Mammary epithelial cell (primary cell): ENCODE measurements at regions of chr6 and their contacts with region 1.

Region 1: DNA sequence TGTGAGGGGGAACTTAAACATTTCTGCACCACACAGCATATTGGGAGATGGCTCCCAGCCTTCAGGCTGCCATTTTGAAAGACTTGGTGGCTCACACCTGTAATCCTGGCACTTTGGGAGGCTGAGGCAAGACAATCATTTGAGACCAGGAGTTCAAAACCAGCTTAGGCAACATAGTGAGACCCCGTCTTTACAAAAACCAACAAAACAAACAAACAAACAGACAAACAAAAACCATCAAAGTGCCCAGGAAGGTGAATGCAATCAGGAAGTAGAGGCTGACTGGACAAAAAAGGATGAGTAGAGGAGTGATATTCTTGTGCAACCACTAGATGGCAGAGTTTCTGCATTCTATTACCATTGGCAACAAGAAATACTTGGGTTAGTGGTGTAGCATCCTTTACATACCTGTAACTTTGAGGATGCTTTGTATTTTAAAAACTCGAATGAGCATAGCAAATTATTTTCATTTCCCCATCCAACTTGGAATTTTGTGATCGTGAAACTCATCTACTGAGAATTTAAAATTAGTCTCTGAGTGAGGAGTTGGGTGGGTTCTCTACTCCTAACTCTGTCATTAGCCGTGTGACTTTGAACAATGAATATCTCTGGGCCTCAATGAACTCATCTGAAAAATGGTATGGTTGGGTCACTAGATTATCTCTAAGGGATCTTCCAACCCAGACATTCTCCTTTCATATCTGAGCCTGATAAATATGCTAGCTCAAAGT is 84.4 kb downstream of the CRYBG1 start:
- DNase-seq: peak; percentile 58
- H3K4me3 ChIP-seq: no peak overlapping the region
- H3K27ac ChIP-seq: no peak overlapping the region
- H3K4me1 ChIP-seq: peaks cover 31% of the 10 kb centered on the region
- H3K27me3 ChIP-seq: no peaks in the 10 kb centered on the region
- CTCF ChIP-seq: peak; percentile 71 to 74

Region 2: DNA sequence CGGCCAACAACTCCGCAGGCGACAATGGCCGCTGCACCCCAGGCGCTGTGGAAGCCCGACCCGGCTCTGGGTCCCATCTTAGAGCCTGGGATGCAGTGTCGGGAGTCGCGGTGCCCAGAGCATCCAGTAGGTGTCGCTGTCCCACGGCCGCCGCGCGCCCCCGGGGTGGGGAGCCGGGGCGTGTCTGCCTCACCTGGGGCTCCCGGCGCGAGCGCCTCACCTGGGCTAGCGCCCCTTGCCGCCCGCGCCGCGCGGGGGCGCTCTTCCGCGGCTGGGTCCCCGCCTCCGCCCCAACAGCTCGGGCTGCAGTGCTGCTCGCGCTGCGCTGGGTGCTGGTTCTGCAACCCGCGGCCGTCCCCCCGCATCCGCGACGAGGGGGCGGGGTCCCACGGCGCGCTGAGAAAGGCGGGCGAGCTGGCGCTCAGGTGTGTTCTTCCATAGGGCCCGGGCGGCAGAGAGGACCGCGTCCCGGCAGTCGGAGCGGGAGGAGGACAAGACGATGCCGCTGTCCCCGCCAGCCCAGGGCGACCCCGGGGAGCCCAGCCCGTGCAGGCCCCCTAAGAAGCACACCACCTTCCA is 84.4 kb before region 1 on chr6 and contains the start of gene CRYBG1:
- CTCF ChIA-PET with region 1: interaction called, 4 read pairs
- dilution Hi-C with region 1: loop called (anchors 5 kb)
- in situ Hi-C with region 1: no loop called
- intact Hi-C with region 1: loop called (anchors 1 kb)
- DNase-seq: peak; percentile 91
- H3K4me3 ChIP-seq: peak within 1 kb of the TSS; percentile 82 to 94 (median 92)
- H3K27ac ChIP-seq: peak within 1 kb of the TSS; percentile 68
- H3K4me1 ChIP-seq: peaks cover 14% of the 10 kb centered on the region
- H3K27me3 ChIP-seq: no peaks in the 10 kb centered on the region
- CTCF ChIP-seq: peak; percentile 71 to 89
- total RNA-seq, gene CRYBG1: 78.5 to 92.9 TPM

Region 3: DNA sequence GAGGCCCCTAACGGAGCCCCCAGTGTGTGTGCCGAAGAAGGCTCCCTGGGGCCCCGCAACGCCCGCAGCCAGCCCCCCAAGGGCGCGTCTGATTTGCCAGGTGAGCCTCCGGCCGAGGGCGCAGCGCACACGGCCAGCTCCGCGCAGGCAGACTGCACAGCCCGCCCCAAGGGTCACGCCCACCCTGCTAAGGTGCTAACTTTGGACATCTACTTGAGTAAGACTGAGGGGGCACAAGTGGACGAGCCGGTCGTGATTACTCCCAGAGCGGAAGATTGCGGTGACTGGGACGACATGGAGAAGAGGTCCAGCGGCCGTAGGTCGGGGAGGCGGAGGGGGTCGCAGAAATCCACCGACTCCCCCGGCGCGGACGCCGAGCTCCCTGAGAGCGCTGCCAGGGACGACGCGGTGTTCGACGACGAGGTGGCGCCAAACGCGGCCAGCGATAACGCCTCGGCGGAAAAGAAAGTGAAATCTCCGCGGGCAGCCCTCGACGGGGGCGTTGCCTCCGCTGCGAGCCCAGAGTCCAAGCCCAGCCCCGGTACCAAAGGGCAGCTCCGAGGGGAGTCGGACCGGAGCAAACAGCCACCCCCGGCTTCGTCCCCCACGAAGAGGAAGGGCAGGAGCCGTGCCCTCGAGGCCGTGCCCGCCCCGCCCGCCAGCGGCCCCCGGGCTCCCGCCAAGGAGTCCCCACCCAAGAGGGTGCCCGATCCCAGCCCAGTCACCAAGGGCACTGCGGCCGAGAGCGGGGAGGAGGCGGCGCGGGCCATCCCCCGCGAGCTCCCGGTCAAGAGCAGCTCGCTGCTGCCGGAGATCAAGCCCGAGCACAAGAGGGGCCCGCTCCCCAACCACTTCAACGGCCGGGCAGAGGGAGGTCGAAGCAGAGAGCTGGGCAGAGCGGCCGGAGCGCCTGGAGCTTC is 67.4 kb after region 1 on chr6:
- CTCF ChIA-PET with region 1: interaction called, 5 read pairs
- dilution Hi-C with region 1: no loop called
- in situ Hi-C with region 1: no loop called
- intact Hi-C with region 1: loop called (anchors 2 kb)
- DNase-seq: peak; percentile 68
- H3K4me3 ChIP-seq: peak overlapping the region; percentile 41 to 62 (median 56)
- H3K27ac ChIP-seq: peak overlapping the region; percentile 70
- H3K4me1 ChIP-seq: peaks cover 41% of the 10 kb centered on the region
- H3K27me3 ChIP-seq: no peaks in the 10 kb centered on the region
- CTCF ChIP-seq: peak in 1 of 2 donors; percentile 22

Region 4: GRCh38 chr6:106568530-106568929 is 123.6 kb after region 1 on chr6:
- CTCF ChIA-PET with region 1: interaction called, 12 read pairs
- dilution Hi-C with region 1: loop called (anchors 5 kb)
- in situ Hi-C with region 1: loop called (anchors 5 kb)
- intact Hi-C with region 1: loop called (anchors 1 kb)
- DNase-seq: peak; percentile 53
- H3K4me3 ChIP-seq: no peak overlapping the region
- H3K27ac ChIP-seq: no peak overlapping the region
- H3K4me1 ChIP-seq: peaks cover 9% of the 10 kb centered on the region
- H3K27me3 ChIP-seq: no peaks in the 10 kb centered on the region
- CTCF ChIP-seq: no peak

Region 5: DNA sequence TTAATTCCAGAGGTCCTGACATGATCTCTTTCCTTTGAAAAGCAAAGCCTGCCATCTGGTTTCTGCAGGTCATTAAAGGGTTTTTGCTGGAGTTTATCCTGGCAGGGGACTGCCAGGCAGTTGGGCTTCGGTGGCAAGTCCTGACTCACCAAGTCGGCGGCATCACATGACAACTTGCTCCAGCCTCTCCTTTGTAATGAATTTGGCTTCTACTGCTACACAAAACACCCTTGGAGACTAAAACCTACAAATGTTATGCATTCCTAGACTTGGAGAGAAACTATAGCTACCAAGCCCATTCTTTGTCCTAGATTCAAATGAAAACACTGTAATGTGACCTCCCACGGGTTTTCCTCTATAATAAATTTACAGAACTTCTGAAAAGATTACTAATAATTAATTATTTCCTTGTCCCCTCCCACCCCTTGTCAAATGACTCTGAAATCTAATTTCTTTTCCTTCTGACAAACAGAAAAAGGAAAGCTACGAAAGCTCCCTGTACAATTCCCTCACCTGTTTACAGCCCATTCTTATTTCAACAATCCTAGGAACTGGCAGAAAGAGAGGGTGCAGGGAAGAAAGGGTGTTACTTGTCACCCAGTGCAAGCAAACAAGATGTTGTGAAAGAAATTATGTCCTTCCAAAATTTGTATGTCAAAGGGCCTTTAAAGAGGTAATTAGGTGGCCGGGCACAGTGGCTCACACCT is 247.3 kb after region 1 on chr6:
- CTCF ChIA-PET with region 1: no interaction called
- dilution Hi-C with region 1: no loop called
- in situ Hi-C with region 1: no loop called
- intact Hi-C with region 1: loop called (anchors 5 kb)
- DNase-seq: peak; percentile 70
- H3K4me3 ChIP-seq: no peak overlapping the region
- H3K27ac ChIP-seq: no peak overlapping the region
- H3K4me1 ChIP-seq: peaks cover 15% of the 10 kb centered on the region
- H3K27me3 ChIP-seq: no peaks in the 10 kb centered on the region
- CTCF ChIP-seq: no peak

Region 6: DNA sequence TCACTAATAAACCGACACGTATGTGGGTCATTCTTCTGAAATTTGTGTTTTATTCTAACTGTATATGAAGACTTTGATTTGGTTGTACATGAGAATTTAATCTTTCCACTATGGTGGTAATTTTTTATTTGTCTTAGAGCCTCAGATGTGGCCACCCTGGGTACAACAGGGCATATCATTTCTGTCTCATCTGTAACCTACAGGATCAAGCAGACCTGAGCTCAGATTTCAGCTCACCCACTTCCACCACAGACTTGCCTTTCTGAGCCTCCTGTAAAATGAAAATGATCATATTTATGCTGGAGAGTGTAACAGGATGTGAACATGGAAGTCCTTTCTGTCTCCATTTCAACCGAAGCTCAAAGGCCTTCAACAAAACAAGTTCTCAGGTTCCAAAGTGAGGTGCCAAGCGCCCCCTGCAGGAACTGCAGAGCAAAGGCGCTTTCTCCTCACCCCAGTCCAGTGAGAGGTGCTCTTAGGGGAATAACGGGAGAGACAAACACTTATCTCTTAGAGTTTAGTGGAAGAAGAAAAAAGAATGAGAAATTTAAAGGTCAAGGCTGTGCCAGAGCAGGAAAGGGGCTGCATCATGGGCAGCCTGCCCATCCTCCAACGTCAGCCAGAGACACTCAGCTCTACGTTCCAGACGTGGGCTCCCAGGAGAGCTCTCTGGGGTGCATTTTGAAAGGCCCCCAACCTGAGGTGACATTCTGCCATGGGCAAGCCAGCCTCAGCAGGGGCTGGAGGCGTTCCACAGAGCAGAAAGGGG is 552.6 kb after region 1 on chr6:
- CTCF ChIA-PET with region 1: no interaction called
- dilution Hi-C with region 1: loop called (anchors 5 kb)
- in situ Hi-C with region 1: loop called in 1 of 2 experiments (anchors 25 kb)
- intact Hi-C with region 1: loop called (anchors 5 kb)
- DNase-seq: peak; percentile 49
- H3K4me3 ChIP-seq: no peak overlapping the region
- H3K27ac ChIP-seq: no peak overlapping the region
- H3K4me1 ChIP-seq: no peaks in the 10 kb centered on the region
- H3K27me3 ChIP-seq: no peaks in the 10 kb centered on the region
- CTCF ChIP-seq: peak; percentile 95 to 96